Endothelial cell of umbilical vein (primary cell): ENCODE measurements at regions of chr12 and their contacts with region 1.

Region 1: GRCh38 chr12:113174461-113175384 is 10.6 kb downstream of the DDX54 start:
- DNase-seq: peak; percentile 66
- H3K4me3 ChIP-seq: no peak overlapping the region
- H3K27ac ChIP-seq: no peak overlapping the region
- H3K4me1 ChIP-seq: no peaks in the 10 kb centered on the region
- H3K27me3 ChIP-seq: no peaks in the 10 kb centered on the region
- CTCF ChIP-seq: peak; percentile 95
- POLR2A ChIP-seq: no peak

Region 2: DNA sequence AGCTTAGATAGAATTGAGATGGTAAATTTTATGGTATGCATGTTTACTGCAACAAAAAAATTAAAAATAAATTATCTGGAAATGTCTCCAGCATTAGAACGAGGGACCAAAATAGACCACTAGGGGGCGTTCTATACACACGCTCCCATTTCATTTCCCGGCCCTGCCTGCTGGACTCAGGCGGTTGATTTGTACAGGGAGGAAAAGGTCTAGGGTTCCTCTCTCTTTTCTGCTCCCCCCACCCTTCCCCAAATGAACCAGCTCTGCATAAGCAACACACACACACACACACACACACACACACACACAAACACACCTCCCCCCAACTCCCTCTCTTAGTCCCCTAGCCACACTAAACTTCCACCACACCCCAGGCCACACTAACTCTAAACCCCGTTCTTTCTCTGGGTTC is 126.0 kb before region 1 on chr12:
- CTCF ChIA-PET with region 1: interaction called, 6 read pairs
- POLR2A ChIA-PET with region 1: no interaction called
- dilution Hi-C with region 1: no loop called
- intact Hi-C with region 1: loop called (anchors 1 kb)
- DNase-seq: peak; percentile 49
- H3K4me3 ChIP-seq: no peak overlapping the region
- H3K27ac ChIP-seq: no peak overlapping the region
- H3K4me1 ChIP-seq: no peaks in the 10 kb centered on the region
- H3K27me3 ChIP-seq: peaks cover 5 to 6% of the 10 kb centered on the region in 2 experiments
- CTCF ChIP-seq: peak; percentile 71 to 79
- POLR2A ChIP-seq: no peak

Region 3: GRCh38 chr12:113161414-113162016 is 13.2 kb before region 1 on chr12:
- CTCF ChIA-PET with region 1: interaction called, 14 read pairs
- POLR2A ChIA-PET with region 1: no interaction called
- dilution Hi-C with region 1: no loop called
- intact Hi-C with region 1: no loop called
- DNase-seq: no peak
- H3K4me3 ChIP-seq: no peak overlapping the region
- H3K27ac ChIP-seq: no peak overlapping the region
- H3K4me1 ChIP-seq: no peaks in the 10 kb centered on the region
- H3K27me3 ChIP-seq: no peaks in the 10 kb centered on the region
- CTCF ChIP-seq: no peak
- POLR2A ChIP-seq: no peak

Region 4: DNA sequence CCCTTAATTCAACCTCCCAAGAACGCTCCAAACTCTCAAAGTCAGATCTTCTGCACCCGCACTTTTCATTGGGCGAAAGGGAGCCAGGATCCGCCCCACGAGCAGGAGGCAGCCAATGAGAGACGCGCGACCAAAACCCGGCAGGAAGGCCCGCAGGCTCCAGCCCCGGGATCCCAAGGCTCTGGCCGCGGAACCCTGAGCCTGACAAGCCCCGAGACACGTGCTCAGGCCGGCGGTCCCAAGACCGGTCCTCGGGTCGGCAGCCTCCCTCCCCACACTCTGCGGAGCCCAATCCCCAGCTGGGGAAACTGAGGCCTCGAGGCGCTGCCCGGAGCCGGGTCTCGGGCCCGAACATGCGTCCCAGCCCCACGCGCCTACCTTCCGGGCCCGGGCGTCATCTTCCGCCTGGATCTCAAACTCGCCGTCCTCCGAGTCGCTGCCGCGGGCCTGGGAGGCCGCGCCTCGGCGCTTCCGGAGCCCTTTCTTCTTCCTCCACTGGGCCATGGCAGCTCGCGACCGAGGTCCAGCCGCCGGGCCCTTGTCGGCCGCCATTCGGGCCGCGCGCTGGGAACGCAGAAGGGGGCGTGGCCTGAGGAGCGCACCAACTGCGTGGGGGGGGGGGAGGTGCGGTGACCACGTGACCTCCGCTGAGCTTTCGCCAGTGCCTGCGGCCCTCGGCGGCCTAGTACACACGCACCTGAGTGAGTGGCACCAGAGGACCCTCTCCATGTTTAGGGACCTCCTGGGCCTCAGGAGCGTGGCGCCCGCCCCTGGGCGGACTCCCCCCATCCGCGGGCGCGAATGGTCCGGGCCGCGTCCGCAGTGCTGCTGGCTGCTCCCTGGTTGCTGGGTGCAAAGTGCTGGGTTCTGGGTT is 10.4 kb after region 1 on chr12 and contains the starts of genes DDX54 and RITA1:
- CTCF ChIA-PET with region 1: interaction called, 21 read pairs
- POLR2A ChIA-PET with region 1: no interaction called
- dilution Hi-C with region 1: no loop called
- intact Hi-C with region 1: no loop called
- DNase-seq: peak; percentile 93
- H3K4me3 ChIP-seq: peak within 1 kb of the TSS; percentile 45 to 79 (median 76)
- H3K27ac ChIP-seq: peak within 1 kb of the TSS; percentile 67
- H3K4me1 ChIP-seq: peaks cover 12% of the 10 kb centered on the region
- H3K27me3 ChIP-seq: no peaks in the 10 kb centered on the region
- CTCF ChIP-seq: no peak
- POLR2A ChIP-seq: peak; percentile 91
- total RNA-seq, gene DDX54: 76.4 and 90.0 TPM in 2 replicates
- total RNA-seq, gene RITA1: 20.4 and 20.7 TPM in 2 replicates